Keratinocyte (primary cell): ENCODE measurements at regions of chr9 and their contacts with region 1.

Region 1: GRCh38 chr9:68714416-68715180 is 9.6 kb downstream of the PIP5K1B start:
- DNase-seq: no peak
- H3K4me3 ChIP-seq: no peak overlapping the region
- H3K27ac ChIP-seq: no peak overlapping the region
- H3K4me1 ChIP-seq: no peaks in the 10 kb centered on the region
- H3K27me3 ChIP-seq: no peaks in the 10 kb centered on the region
- CTCF ChIP-seq: no peak

Region 2: DNA sequence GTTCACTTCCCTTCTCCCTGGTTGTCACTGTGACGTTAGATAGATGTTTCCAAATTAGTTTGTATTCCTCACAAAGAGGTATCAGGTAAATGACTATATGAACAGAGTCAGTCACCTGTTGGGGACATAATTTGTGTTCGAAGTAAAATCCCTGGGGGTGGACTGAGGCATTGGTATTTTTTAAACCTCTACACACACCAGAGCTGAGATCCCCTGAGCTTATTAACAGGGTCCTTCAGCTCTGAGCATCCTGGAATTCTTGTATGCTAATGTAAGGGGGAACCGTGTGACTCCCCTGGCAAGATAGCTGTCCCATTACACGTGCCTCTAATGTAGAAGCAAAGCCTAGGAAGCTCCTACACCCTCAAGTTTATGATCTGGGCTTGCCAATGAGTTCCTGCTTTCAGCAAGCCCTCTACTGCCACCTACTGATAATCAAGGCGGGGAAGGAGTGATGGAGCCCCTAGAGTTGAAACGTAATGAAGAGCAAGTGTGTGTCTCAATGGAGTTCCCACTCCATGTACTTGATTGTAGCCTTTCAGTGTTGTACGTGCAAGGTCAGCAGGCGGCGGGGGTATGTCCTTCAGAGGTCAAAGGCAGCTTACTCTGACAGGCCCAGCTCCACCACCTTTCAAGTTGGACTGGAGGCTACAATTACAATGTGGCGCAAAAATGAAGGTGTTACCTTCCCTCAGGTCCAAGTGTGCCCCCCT is 285.0 kb after region 1 on chr9:
- dilution Hi-C with region 1: loop called (anchors 10 kb)
- DNase-seq: peak; percentile 21
- H3K4me3 ChIP-seq: no peak overlapping the region
- H3K27ac ChIP-seq: no peak overlapping the region
- H3K4me1 ChIP-seq: no peaks in the 10 kb centered on the region
- H3K27me3 ChIP-seq: no peaks in the 10 kb centered on the region
- CTCF ChIP-seq: peak; percentile 90 to 93 (median 91)